IMR-90 (cell line): ENCODE measurements at regions of chr3 and their contacts with region 1.

Region 1: GRCh38 chr3:187265461-187265955 is 26.0 kb downstream of the MASP1 start:
- DNase-seq: no peak
- ATAC-seq: peak; percentile 3; the same call in 1 of the 2 replicates
- H3K4me3 ChIP-seq: no peak overlapping the region
- H3K27ac ChIP-seq: peak overlapping the region; percentile 75; the same call in 1 of the 2 replicates
- H3K4me1 ChIP-seq: peaks cover 22% of the 10 kb centered on the region
- H3K27me3 ChIP-seq: no peaks in the 10 kb centered on the region
- CTCF ChIP-seq: no peak
- POLR2A ChIP-seq: no peak
- RAD21 ChIP-seq: no peak

Region 2: GRCh38 chr3:187172929-187173328 is 92.6 kb before region 1 on chr3:
- CTCF ChIA-PET with region 1: no interaction called
- POLR2A ChIA-PET with region 1: no interaction called
- dilution Hi-C with region 1: no loop called
- in situ Hi-C with region 1: no loop called
- intact Hi-C with region 1: no loop called
- DNase-seq: no peak
- ATAC-seq: no peak
- H3K4me3 ChIP-seq: no peak overlapping the region
- H3K27ac ChIP-seq: no peak overlapping the region
- H3K4me1 ChIP-seq: peaks cover 2% of the 10 kb centered on the region; the same call in 1 of the 2 replicates
- H3K27me3 ChIP-seq: no peaks in the 10 kb centered on the region
- CTCF ChIP-seq: no peak
- POLR2A ChIP-seq: no peak
- RAD21 ChIP-seq: no peak

Region 3: DNA sequence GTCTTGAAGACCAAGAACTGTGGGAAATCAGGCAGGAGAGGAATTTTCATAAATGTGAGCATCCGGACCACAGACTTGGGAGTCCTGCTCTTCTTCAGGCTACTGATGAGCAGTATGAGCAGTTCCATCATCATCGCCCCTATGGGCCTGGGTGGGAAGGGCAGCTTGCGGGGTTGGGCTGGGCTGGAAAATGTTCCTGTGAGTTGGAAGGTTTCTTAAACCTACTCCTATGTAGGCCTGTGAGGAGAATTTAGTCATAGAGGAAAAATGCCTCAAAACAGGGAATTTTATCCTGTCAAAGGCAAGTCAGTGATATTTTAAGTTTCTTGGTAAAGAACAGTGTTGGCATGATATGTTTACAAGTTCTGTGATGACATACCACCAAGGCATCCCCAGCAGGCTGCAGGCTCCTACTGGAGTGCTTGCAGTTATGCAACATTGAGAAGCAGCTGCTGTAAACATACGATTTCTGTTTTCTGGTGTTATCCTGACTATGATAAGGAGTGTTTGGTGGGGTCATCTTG is 15.7 kb after region 1 on chr3:
- CTCF ChIA-PET with region 1: interaction called, 5 read pairs
- POLR2A ChIA-PET with region 1: no interaction called
- dilution Hi-C with region 1: no loop called
- in situ Hi-C with region 1: no loop called
- intact Hi-C with region 1: loop called (anchors 1 kb)
- DNase-seq: peak; percentile 98
- ATAC-seq: peak; percentile 92
- H3K4me3 ChIP-seq: no peak overlapping the region
- H3K27ac ChIP-seq: peak overlapping the region; percentile 90
- H3K4me1 ChIP-seq: peaks cover 17% of the 10 kb centered on the region
- H3K27me3 ChIP-seq: no peaks in the 10 kb centered on the region
- CTCF ChIP-seq: peak; percentile 40
- POLR2A ChIP-seq: no peak
- RAD21 ChIP-seq: no peak